BJ (cell line): ENCODE measurements at regions of chr12 and their contacts with region 1.

Region 1: DNA sequence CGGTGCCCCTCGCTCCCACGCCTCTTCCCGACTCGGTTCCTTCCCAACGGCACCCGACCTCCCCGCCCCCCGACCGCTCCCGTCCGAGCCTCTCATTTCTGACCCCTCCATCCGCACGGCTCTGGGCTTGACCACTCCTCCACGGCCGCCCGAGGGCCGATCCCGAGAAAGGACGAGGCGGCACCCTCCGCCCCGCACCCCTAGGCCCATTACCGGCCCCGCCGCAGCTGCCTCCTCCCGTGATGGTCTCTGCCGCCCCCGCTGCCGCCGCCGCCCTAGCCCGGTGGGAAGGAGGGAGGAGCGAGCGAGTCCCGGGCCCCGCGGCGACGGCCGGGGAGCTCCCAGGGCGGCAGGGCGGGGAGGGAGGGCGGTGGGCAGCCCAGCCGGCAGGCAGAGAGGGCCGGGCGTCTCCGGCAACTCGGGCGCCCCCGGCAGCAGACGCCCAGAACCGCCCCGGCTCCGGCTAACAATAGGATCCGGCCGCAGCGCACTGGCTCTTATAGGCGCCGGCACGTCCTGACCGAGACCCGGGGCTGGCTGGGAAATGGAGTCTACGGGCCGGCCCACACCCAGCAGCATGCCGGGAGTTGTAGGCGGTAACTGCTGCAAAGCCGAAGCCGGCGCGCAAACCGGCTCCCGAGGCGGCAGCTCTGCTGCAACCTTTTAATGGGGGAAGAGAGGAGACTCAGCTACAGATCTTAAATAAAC is at the start of gene CSRNP2:
- DNase-seq: peak; percentile 70
- H3K4me3 ChIP-seq: peak within 1 kb of the TSS; percentile 91
- H3K27me3 ChIP-seq: no peaks in the 10 kb centered on the region
- CTCF ChIP-seq: no peak
- polyA plus RNA-seq, gene CSRNP2: 20.9 and 21.0 TPM in 2 replicates

Region 2: GRCh38 chr12:50025187-50026059 is 1057.9 kb before region 1 on chr12 and contains the start of gene RACGAP1:
- CTCF ChIA-PET with region 1: no interaction called
- POLR2A ChIA-PET with region 1: interaction called, 15 read pairs
- DNase-seq: peak; percentile 87
- H3K4me3 ChIP-seq: peak within 1 kb of the TSS; percentile 65
- H3K27me3 ChIP-seq: no peaks in the 10 kb centered on the region
- CTCF ChIP-seq: no peak
- polyA plus RNA-seq, gene RACGAP1: 42.8 and 55.3 TPM in 2 replicates